Adrenal gland (tissue), 19 donors: ENCODE measurements at regions of chr1 and their contacts with region 1.

Region 1: DNA sequence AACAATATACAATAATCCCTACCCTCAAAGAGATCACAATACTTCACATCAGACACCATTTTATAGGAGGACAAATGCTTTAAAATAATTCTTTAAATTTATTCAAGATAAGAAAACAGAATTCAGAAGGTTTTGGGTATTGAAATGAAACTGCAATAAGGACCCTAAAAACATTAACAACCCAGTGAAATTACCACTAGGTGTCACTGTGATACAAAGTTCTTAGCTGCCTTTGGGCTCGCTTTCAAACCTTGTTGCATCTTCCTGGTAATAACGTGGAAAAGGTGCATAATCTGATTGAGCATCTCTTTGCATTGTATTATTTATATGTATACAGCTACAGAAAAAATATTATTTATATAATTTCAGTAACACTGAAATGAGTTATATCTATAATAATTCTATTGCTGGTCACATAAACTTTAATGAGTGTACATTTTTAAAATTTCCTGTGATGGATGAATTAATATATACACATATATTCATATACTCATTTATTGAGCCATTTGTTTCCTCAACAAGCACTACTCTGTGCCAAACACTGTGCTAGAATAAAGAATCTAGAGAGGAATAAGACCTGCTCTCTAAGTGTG is 185.2 kb downstream of the FAF1 start:
- DNase-seq: peak in 2 of 7 donors; percentile 12 to 20
- H3K4me3 ChIP-seq: no peak overlapping the region
- H3K27ac ChIP-seq: no peak overlapping the region
- H3K4me1 ChIP-seq: peaks cover 0 to 4% of the 10 kb centered on the region in 2 donors
- H3K27me3 ChIP-seq: no peaks in the 10 kb centered on the region
- CTCF ChIP-seq: peak; percentile 60 to 79 (median 70)
- POLR2A ChIP-seq: no peak

Region 2: GRCh38 chr1:50929376-50929958 is 154.6 kb after region 1 on chr1:
- intact Hi-C with region 1: loop called in 1 of 2 experiments (anchors 5 kb)
- DNase-seq: no peak
- H3K4me3 ChIP-seq: no peak overlapping the region
- H3K27ac ChIP-seq: no peak overlapping the region
- H3K4me1 ChIP-seq: no peaks in the 10 kb centered on the region
- H3K27me3 ChIP-seq: no peaks in the 10 kb centered on the region
- CTCF ChIP-seq: peak; percentile 31 to 71 (median 60)
- POLR2A ChIP-seq: no peak

Region 3: DNA sequence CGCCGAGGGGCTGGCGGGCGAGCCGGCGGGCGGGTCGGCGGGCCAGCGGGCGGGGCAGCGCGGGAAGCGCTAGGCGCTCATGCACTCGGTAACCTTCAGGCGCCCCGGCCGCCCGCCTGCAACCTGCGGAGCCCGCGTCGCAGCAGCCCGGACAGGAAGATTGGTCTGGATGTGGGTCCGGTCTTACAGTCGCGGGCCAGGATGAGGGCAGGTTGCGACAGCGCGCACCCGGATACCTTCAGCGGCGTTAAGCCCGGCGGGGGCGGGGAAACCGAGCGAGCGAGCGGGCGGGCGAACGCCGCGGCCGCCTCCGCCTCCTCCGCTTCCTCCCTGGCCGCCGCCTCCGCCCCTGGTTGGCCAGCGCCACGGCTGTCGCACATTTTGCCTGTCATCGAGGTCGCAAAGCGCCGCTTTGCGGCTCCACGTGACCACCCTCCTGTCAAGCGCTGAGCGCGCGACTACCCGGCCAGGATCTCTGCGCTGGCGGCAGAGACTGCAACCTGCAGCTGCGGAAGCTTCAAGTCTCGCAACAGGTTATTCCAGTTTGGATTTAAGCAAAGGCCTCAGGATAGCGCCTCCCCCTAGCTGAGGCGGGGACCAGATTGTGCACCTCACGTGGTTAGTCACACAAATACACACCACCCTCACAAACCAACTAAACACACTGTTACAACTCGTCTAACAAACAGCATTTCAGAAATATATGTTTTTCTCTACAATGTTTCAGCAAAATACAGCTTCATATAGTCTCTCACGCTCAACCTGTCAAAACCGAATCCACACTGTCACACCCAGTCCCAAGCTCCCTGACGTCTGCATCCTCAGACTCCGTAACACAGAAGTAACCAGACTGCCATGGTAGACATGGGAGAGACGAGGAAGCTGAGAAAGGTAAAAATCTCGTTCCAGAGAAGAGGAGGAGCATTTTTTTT is 185.3 kb after region 1 on chr1 and contains the start of gene FAF1:
- intact Hi-C with region 1: loop called in 1 of 2 experiments (anchors 10 kb)
- DNase-seq: peak; percentile 97 to 98 (median 97)
- H3K4me3 ChIP-seq: peak within 1 kb of the TSS; percentile 55 to 98 (median 68)
- H3K27ac ChIP-seq: peak within 1 kb of the TSS; percentile 72 to 93 (median 85)
- H3K4me1 ChIP-seq: peaks cover 8 to 16% of the 10 kb centered on the region in 2 donors
- H3K27me3 ChIP-seq: no peaks in the 10 kb centered on the region
- CTCF ChIP-seq: peak; percentile 8 to 59 (median 42)
- POLR2A ChIP-seq: peak; percentile 88 to 97
- total RNA-seq, gene FAF1: 25.2 to 88.4 (median 48.0) TPM

Region 4: DNA sequence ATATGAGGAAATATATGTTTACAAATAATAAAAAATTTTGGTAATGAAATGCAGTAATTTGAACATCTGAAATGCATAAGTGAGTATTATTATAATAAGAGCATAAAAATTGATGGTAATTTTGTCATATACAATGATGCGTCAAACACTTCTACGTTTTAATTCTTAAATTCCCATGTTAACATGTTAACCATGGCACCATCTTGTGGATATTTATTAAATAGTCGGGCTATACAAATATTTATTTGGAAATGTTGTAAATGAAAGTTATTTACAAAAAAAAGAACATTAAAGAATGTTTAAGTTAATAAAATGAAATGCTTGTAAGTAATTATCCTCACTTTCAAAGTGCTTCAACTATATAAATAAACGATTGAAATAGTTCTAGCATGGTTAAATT is 270.0 kb after region 1 on chr1:
- intact Hi-C with region 1: loop called (anchors 10 kb)
- DNase-seq: no peak
- H3K4me3 ChIP-seq: no peak overlapping the region
- H3K27ac ChIP-seq: no peak overlapping the region
- H3K4me1 ChIP-seq: no peaks in the 10 kb centered on the region
- H3K27me3 ChIP-seq: no peaks in the 10 kb centered on the region
- CTCF ChIP-seq: peak in 5 of 6 experiments; percentile 21 to 65 (median 59)
- POLR2A ChIP-seq: no peak

Region 5: DNA sequence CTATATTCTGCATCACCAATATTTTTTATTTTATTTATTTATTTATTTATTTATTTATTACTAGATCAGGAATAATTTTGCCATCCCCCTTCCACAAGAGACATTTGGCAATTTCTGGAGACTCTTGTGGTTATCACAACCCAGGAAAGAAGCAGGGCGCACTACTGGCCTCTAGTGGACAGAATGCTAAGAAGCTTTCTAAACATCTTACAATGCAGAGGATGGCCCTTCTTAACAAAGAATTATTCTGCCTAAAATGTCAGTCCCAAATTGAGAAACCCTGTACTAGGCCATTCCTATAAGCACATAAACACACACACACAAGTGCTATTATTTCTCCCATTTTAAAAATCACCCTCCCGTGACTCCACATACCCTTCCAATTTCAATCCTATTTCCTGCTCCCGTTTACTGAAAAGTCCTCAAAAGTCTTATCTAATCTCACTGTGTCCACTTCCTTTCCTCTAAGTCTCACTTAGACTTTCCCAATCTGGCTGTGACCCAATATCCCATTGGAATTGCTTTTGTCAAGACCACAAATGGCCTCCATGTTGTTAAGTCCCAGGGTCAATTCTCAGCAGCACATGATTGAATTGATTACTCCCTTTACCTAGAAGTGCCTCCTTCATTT is 417.5 kb after region 1 on chr1:
- intact Hi-C with region 1: loop called in 1 of 2 experiments (anchors 2 kb)
- DNase-seq: peak; percentile 61 to 87 (median 75)
- H3K4me3 ChIP-seq: no peak overlapping the region
- H3K27ac ChIP-seq: peak overlapping the region in 1 of 5 donors; percentile 18
- H3K4me1 ChIP-seq: no peaks in the 10 kb centered on the region
- H3K27me3 ChIP-seq: no peaks in the 10 kb centered on the region
- CTCF ChIP-seq: peak; percentile 53 to 88 (median 77)
- POLR2A ChIP-seq: no peak